MCF 10A (cell line): ENCODE measurements at regions of chr19 and their contacts with region 1.

Region 1: GRCh38 chr19:14556662-14557188 is 15.1 kb downstream of the NDUFB7 start:
- DNase-seq: peak; percentile 81
- H3K4me3 Mint-ChIP-seq: peak overlapping the region; percentile 45
- H3K27ac Mint-ChIP-seq: peak overlapping the region; percentile 88
- H3K4me1 Mint-ChIP-seq: peaks cover 34% of the 10 kb centered on the region
- H3K27me3 Mint-ChIP-seq: no peaks in the 10 kb centered on the region
- CTCF ChIP-seq: peak; percentile 93

Region 2: GRCh38 chr19:14505488-14506432 is 51.0 kb before region 1 on chr19:
- CTCF ChIA-PET with region 1: interaction called, 27 read pairs
- POLR2A ChIA-PET with region 1: interaction called, 12 read pairs
- intact Hi-C with region 1: no loop called
- DNase-seq: peak; percentile 89
- H3K4me3 Mint-ChIP-seq: peak overlapping the region; percentile 65
- H3K27ac Mint-ChIP-seq: peak overlapping the region; percentile 96
- H3K4me1 Mint-ChIP-seq: peaks cover 33% of the 10 kb centered on the region
- H3K27me3 Mint-ChIP-seq: no peaks in the 10 kb centered on the region
- CTCF ChIP-seq: peak; percentile 85

Region 3: GRCh38 chr19:14536926-14537692 is 19.6 kb before region 1 on chr19:
- CTCF ChIA-PET with region 1: interaction called, 20 read pairs
- POLR2A ChIA-PET with region 1: interaction called, 3 read pairs
- intact Hi-C with region 1: no loop called
- DNase-seq: peak; percentile 93
- H3K4me3 Mint-ChIP-seq: peak overlapping the region; percentile 33
- H3K27ac Mint-ChIP-seq: no peak overlapping the region
- H3K4me1 Mint-ChIP-seq: no peaks in the 10 kb centered on the region
- H3K27me3 Mint-ChIP-seq: no peaks in the 10 kb centered on the region
- CTCF ChIP-seq: no peak

Region 4: DNA sequence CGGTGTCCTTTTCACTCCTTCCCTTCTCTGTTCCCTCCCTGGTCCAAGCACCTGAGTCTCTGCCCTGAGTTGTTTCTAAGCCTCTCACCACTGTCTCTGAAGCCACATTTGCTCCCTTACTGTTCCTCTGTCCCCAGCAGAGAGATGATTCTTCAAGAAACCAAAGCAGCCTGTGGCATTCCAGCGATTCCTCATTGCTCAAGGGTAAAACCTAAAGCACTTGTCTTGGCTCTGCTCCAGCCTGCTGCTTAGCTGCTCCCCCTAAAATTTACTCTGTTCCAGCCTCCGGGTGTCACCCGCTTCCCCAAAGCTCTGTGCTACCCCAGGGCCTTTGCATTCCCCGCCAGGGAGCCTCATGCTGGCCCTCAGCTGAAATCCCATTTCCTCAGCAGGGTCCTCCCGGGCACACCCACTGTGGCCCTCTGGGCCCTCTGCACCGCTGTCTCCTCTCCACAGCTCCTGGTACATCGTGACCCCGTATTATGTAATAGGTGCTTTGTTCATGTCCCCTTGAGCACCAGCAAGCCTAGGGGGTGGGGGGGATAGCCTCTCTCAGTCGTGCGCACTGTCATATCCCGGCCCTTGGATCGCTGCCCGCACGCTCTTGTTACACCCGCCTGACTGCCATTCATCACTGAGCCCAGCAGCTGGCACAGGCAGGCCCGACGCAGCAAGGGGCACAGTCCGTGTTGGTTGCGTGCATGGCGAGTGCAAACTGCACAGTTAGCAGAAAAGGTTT is 11.6 kb before region 1 on chr19:
- CTCF ChIA-PET with region 1: interaction called, 5 read pairs
- POLR2A ChIA-PET with region 1: interaction called, 10 read pairs
- intact Hi-C with region 1: no loop called
- DNase-seq: peak; percentile 93
- H3K4me3 Mint-ChIP-seq: peak overlapping the region; percentile 59
- H3K27ac Mint-ChIP-seq: peak overlapping the region; percentile 7
- H3K4me1 Mint-ChIP-seq: peaks cover 17% of the 10 kb centered on the region
- H3K27me3 Mint-ChIP-seq: no peaks in the 10 kb centered on the region
- CTCF ChIP-seq: no peak